ENCODE measurements at regions of chr5 and their contacts with region 1.

Region 1: GRCh38 chr5:141040771-141041426 is 10.3 kb upstream of the PCDHB1 start:
- DNase-seq: peak; percentile 69
- ATAC-seq: peak; percentile 64
- H3K4me3 ChIP-seq: no peak overlapping the region
- H3K27ac ChIP-seq: no peak overlapping the region
- H3K4me1 ChIP-seq: no peaks in the 10 kb centered on the region
- H3K27me3 ChIP-seq: no peaks in the 10 kb centered on the region
- CTCF ChIP-seq: peak; percentile 81
- EP300 ChIP-seq: no peak
- POLR2A ChIP-seq: no peak
- RAD21 ChIP-seq: peak; percentile 81

Region 2: GRCh38 chr5:140840978-140841959 is 199.6 kb before region 1 on chr5 and contains the start of gene PCDHA8:
- CTCF ChIA-PET with region 1: interaction called, 37 read pairs
- POLR2A ChIA-PET with region 1: no interaction called
- in situ Hi-C with region 1: no loop called
- intact Hi-C with region 1: loop called (anchors 1 kb)
- DNase-seq: peak; percentile 48
- ATAC-seq: peak; percentile 89
- H3K4me3 ChIP-seq: peak within 1 kb of the TSS in 2 of 3 experiments; percentile 28 to 49; a peak in 3 of 6 replicates
- H3K27ac ChIP-seq: no peak within 1 kb of the TSS
- H3K4me1 ChIP-seq: no peaks in the 10 kb centered on the region
- H3K27me3 ChIP-seq: no peaks in the 10 kb centered on the region
- CTCF ChIP-seq: peak; percentile 65
- EP300 ChIP-seq: no peak
- POLR2A ChIP-seq: no peak
- RAD21 ChIP-seq: no peak; the same call in 1 of the 2 replicates
- total RNA-seq, gene PCDHA8: 0.07 and 0.11 TPM in 2 replicates

Region 3: GRCh38 chr5:140868721-140869554 is 172.0 kb before region 1 on chr5 and contains the start of gene PCDHA11:
- CTCF ChIA-PET with region 1: interaction called, 34 read pairs
- POLR2A ChIA-PET with region 1: no interaction called
- in situ Hi-C with region 1: loop called (anchors 5 kb)
- intact Hi-C with region 1: loop called (anchors 1 kb)
- DNase-seq: peak; percentile 45
- ATAC-seq: peak; percentile 97
- H3K4me3 ChIP-seq: peak within 1 kb of the TSS in 2 of 3 experiments; percentile 10 to 28; a peak in 1 of 6 replicates
- H3K27ac ChIP-seq: no peak within 1 kb of the TSS
- H3K4me1 ChIP-seq: no peaks in the 10 kb centered on the region
- H3K27me3 ChIP-seq: no peaks in the 10 kb centered on the region
- CTCF ChIP-seq: peak; percentile 73
- EP300 ChIP-seq: no peak
- POLR2A ChIP-seq: no peak
- RAD21 ChIP-seq: no peak
- total RNA-seq, gene PCDHA11: 0.07 and 0.29 TPM in 2 replicates

Region 4: DNA sequence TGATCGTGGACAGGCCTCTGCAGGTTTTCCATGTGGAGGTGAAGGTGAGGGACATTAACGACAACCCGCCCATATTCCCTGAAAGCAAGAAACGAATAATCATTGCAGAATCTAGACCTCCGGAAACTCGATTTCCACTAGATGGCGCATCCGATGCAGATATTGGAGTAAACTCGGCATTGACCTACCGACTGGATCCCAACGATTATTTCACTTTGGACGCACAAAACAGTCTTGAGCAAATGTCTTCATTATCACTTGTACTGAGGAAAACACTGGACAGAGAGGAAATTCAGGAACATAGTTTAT is 158.4 kb before region 1 on chr5:
- CTCF ChIA-PET with region 1: interaction called, 6 read pairs
- POLR2A ChIA-PET with region 1: no interaction called
- in situ Hi-C with region 1: no loop called
- intact Hi-C with region 1: loop called (anchors 1 kb)
- DNase-seq: no peak
- ATAC-seq: no peak
- H3K4me3 ChIP-seq: no peak overlapping the region
- H3K27ac ChIP-seq: no peak overlapping the region
- H3K4me1 ChIP-seq: no peaks in the 10 kb centered on the region
- H3K27me3 ChIP-seq: no peaks in the 10 kb centered on the region
- CTCF ChIP-seq: peak; percentile 28; the same call in 1 of the 2 replicates
- EP300 ChIP-seq: no peak
- POLR2A ChIP-seq: no peak
- RAD21 ChIP-seq: no peak

Measured in HepG2 (cell line).